A673 (cell line): ENCODE measurements at regions of chr5 and their contacts with region 1.

Region 1: DNA sequence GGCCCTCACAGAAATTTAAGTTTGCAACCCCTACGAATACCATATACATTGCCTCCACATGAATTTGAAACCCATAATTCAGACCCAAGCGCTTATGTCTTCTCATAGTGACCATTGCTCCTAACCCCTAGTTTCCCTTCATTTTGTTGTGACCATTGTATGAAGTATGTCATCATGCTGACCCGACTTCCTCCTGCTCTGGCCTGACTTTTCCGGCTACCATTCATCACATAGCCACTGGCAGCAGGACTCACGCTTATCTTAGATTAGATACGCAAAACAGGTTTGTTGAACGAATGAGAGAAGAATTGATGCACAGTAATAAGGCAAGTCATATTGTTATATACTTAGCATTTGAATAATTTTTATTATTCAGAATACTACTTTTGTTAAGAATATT is 345.4 kb downstream of the FBXL17 start:
- DNase-seq: no peak
- H3K4me3 ChIP-seq: no peak overlapping the region
- H3K27ac ChIP-seq: no peak overlapping the region
- H3K4me1 ChIP-seq: no peaks in the 10 kb centered on the region
- H3K27me3 ChIP-seq: no peaks in the 10 kb centered on the region
- CTCF ChIP-seq: no peak

Region 2: DNA sequence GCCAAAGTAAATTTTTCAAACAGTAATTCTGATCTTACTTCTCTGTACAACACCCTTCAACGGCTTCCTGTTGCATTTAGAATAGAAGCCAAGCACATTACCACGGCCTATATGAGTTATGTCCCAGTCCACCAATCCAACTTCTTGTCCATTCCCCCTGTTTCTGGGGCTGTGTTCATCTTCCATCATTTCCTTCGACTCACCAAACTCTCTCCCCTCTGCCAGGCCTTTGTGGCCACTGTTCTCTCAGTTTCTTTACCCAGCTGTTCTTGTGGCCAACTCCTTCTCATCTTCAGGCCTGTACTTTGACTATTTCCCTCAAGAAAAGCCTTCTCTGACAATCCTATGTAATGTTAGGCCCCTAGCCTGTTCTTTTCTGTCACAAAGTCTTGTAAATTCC is 106.4 kb before region 1 on chr5:
- CTCF ChIA-PET with region 1: no interaction called
- POLR2A ChIA-PET with region 1: no interaction called
- intact Hi-C with region 1: no loop called
- DNase-seq: no peak
- H3K4me3 ChIP-seq: no peak overlapping the region
- H3K27ac ChIP-seq: no peak overlapping the region
- H3K4me1 ChIP-seq: peaks cover 3% of the 10 kb centered on the region
- H3K27me3 ChIP-seq: no peaks in the 10 kb centered on the region
- CTCF ChIP-seq: no peak

Region 3: GRCh38 chr5:108006791-108007190 is 29.7 kb before region 1 on chr5:
- CTCF ChIA-PET with region 1: no interaction called
- POLR2A ChIA-PET with region 1: no interaction called
- intact Hi-C with region 1: loop called (anchors 1 kb)
- DNase-seq: no peak
- H3K4me3 ChIP-seq: no peak overlapping the region
- H3K27ac ChIP-seq: no peak overlapping the region
- H3K4me1 ChIP-seq: no peaks in the 10 kb centered on the region
- H3K27me3 ChIP-seq: no peaks in the 10 kb centered on the region
- CTCF ChIP-seq: no peak

Region 4: DNA sequence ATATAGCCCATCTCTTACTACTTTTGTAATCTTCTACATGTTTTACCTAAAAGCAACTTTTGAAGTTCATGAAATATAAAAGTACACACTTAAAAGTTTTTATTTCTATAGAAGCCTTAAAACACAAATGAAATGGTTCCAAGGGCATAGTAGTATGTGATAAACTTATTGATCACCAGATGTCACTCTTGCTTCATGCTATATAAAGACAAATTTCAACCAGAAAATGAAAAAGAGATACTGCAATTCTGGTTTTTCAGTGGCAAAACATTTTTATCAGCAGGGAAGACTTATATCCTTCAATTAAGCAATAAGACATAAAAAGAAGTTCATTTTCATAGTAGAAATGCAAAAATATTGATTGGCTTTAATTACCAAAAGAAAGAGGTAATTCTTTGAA is 414.8 kb after region 1 on chr5:
- CTCF ChIA-PET with region 1: no interaction called
- POLR2A ChIA-PET with region 1: no interaction called
- intact Hi-C with region 1: no loop called
- DNase-seq: no peak
- H3K4me3 ChIP-seq: no peak overlapping the region
- H3K27ac ChIP-seq: no peak overlapping the region
- H3K4me1 ChIP-seq: no peaks in the 10 kb centered on the region
- H3K27me3 ChIP-seq: no peaks in the 10 kb centered on the region
- CTCF ChIP-seq: peak; percentile 31; the same call in 1 of the 2 replicates